ENCODE measurements at regions of chr11 and their contacts with region 1.

Region 1: DNA sequence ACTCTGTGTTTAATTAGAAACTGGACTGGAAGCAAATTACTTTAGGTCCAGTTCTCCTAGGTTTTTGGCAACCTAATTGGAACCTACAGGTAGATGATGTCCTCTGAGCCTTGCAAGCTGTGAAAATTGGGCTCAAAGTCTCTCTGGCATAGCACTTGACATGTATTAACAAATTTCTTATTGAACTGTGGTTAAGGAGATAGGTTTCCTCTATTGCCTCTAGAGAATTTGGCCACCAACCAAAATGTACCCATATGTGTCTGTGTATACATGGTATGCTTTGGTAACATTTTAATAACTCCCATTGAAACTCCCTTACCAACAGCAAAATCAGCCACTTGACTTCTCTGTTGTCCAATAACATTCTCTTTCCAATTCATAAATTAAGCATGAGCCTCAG is at the start of gene OR4D10:
- DNase-seq: no peak
- H3K4me3 ChIP-seq: no peak within 1 kb of the TSS
- H3K27ac ChIP-seq: no peak within 1 kb of the TSS
- H3K4me1 ChIP-seq: no peaks in the 10 kb centered on the region
- H3K27me3 ChIP-seq: peaks cover 29% of the 10 kb centered on the region
- CTCF ChIP-seq: no peak
- total RNA-seq, gene OR4D10: not detected in 2 replicates

Region 2: DNA sequence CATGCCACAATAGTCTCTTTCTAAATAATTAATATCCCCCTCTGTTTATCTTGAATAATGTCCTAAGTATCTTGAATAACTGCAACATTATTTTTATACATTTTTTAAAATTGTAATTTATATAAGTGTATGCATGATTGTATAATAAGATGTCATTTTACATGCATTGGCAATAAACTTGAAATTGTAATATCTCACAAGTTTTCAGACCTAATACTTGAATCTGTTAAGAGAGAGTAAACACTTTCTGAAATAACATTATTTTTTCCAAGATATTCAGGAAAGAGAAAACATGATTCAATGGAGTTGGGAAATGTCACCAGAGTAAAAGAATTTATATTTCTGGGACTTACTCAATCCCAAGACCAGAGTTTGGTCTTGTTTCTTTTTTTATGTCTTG is 30.3 kb after region 1 on chr11 and contains the start of gene OR4D11:
- CTCF ChIA-PET with region 1: no interaction called
- POLR2A ChIA-PET with region 1: interaction called, 17 read pairs
- intact Hi-C with region 1: no loop called
- DNase-seq: no peak
- H3K4me3 ChIP-seq: no peak within 1 kb of the TSS
- H3K27ac ChIP-seq: no peak within 1 kb of the TSS
- H3K4me1 ChIP-seq: no peaks in the 10 kb centered on the region
- H3K27me3 ChIP-seq: peaks cover 33% of the 10 kb centered on the region
- CTCF ChIP-seq: no peak
- total RNA-seq, gene OR4D11: not detected in 2 replicates

Measured in PC-9 (cell line).